ENCODE measurements at regions of chr19 and their contacts with region 1.

Region 1: GRCh38 chr19:50724522-50725217 is 1.5 kb downstream of the CLEC11A start:
- DNase-seq: peak; percentile 91 to 100 (median 99)
- ATAC-seq: peak; percentile 75 to 80
- H3K4me3 Mint-ChIP-seq: peak overlapping the region; percentile 87 to 94 (median 90)
- H3K27ac Mint-ChIP-seq: peak overlapping the region; percentile 35 to 97 (median 93)
- H3K4me1 Mint-ChIP-seq: peaks cover 33 to 74% (median 61%) of the 10 kb centered on the region in 4 donors
- H3K27me3 Mint-ChIP-seq: peaks cover 4 to 25% (median 10%) of the 10 kb centered on the region in 5 donors

Region 2: GRCh38 chr19:50511068-50511822 is 213.4 kb before region 1 on chr19 and contains the start of gene JOSD2:
- POLR2A ChIA-PET with region 1: interaction called, 16 read pairs
- DNase-seq: peak; percentile 89 to 99 (median 96)
- ATAC-seq: peak; percentile 88 to 93
- H3K4me3 Mint-ChIP-seq: peak within 1 kb of the TSS; percentile 76 to 98 (median 94)
- H3K27ac Mint-ChIP-seq: peak within 1 kb of the TSS; percentile 89 to 100 (median 99)
- H3K4me1 Mint-ChIP-seq: peaks cover 19 to 25% (median 19%) of the 10 kb centered on the region in 4 donors
- H3K27me3 Mint-ChIP-seq: peaks cover 0 to 18% (median 9%) of the 10 kb centered on the region in 5 donors
- polyA plus RNA-seq, gene JOSD2: 19.8 to 26.2 (median 22.8) TPM

Region 3: GRCh38 chr19:50712833-50713232 is 11.8 kb before region 1 on chr19:
- POLR2A ChIA-PET with region 1: interaction called, 43 read pairs
- DNase-seq: no peak
- ATAC-seq: peak; percentile 37 to 52
- H3K4me3 Mint-ChIP-seq: peak overlapping the region; percentile 39 to 89 (median 68)
- H3K27ac Mint-ChIP-seq: peak overlapping the region in 9 of 10 donors; percentile 56 to 94 (median 88)
- H3K4me1 Mint-ChIP-seq: peaks cover 32 to 80% (median 56%) of the 10 kb centered on the region in 4 donors
- H3K27me3 Mint-ChIP-seq: peaks cover 0 to 13% (median 5%) of the 10 kb centered on the region in 5 donors

Region 4: DNA sequence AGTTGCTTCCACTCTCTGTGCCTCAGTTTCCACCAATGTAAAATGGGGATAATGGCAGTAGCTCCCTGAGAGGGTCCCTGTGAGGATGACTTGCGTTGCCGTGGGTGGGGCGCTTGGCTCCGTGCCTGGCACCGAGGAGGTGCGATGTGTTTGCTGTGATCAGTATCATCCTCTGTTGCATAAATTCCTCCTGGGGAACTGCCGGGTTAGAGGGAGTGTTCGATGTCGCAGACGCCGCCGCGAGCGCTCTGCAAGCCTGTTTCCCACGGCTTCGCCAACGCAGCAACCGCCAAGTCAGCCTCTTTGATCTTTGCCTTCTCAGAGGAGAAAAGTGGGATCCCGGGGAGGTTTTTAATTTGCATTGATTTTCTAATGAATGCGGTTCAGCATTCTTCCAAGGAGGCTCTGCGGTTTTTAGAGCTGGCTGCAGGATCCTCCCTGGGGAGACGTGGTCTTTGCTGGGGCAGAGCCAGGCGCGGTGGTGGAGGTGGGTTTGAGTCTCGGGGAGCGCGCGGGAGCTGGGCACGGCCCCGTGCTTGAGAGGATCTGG is 53.2 kb after region 1 on chr19:
- POLR2A ChIA-PET with region 1: interaction called, 12 read pairs
- DNase-seq: peak in 2 of 10 donors; percentile 7 to 21
- ATAC-seq: peak in 1 of 2 donors; percentile 57
- H3K4me3 Mint-ChIP-seq: peak overlapping the region in 2 of 10 donors; percentile 20 to 36
- H3K27ac Mint-ChIP-seq: no peak overlapping the region
- H3K4me1 Mint-ChIP-seq: peaks cover 7 to 14% (median 13%) of the 10 kb centered on the region in 4 donors
- H3K27me3 Mint-ChIP-seq: peaks cover 44 to 85% (median 59%) of the 10 kb centered on the region in 5 donors

Region 5: GRCh38 chr19:50804420-50805272 is 80.0 kb after region 1 on chr19:
- POLR2A ChIA-PET with region 1: interaction called, 18 read pairs
- DNase-seq: peak; percentile 92 to 100 (median 98)
- ATAC-seq: peak; percentile 95 to 96
- H3K4me3 Mint-ChIP-seq: peak overlapping the region; percentile 89 to 100 (median 99)
- H3K27ac Mint-ChIP-seq: peak overlapping the region; percentile 99 to 100 (median 100)
- H3K4me1 Mint-ChIP-seq: peaks cover 24 to 47% (median 40%) of the 10 kb centered on the region in 4 donors
- H3K27me3 Mint-ChIP-seq: no peaks in the 10 kb centered on the region